K562 (cell line): ENCODE measurements at regions of chr10 and their contacts with region 1.

Region 1: GRCh38 chr10:98748298-98748697 is 301.6 kb upstream of the HPS1 start:
- DNase-seq: peak; percentile 28 to 73 (median 33)
- ATAC-seq: peak; percentile 74
- H3K4me3 ChIP-seq: no peak overlapping the region
- H3K27ac ChIP-seq: no peak overlapping the region
- H3K4me1 ChIP-seq: no peaks in the 10 kb centered on the region
- H3K27me3 ChIP-seq: no peaks in the 10 kb centered on the region
- CTCF ChIP-seq: peak; percentile 38 to 50 (median 41); a peak in 5 of 6 replicates
- EP300 ChIP-seq: no peak
- POLR2A ChIP-seq: no peak
- RAD21 ChIP-seq: peak; percentile 56 to 79

Region 2: GRCh38 chr10:98815039-98815885 is 67.0 kb after region 1 on chr10:
- CTCF ChIA-PET with region 1: no interaction called
- POLR2A ChIA-PET with region 1: no interaction called
- in situ Hi-C with region 1: no loop called
- intact Hi-C with region 1: no loop called
- DNase-seq: no peak
- ATAC-seq: no peak
- H3K4me3 ChIP-seq: no peak overlapping the region
- H3K27ac ChIP-seq: no peak overlapping the region
- H3K4me1 ChIP-seq: no peaks in the 10 kb centered on the region; a peak in 1 of 5 replicates
- H3K27me3 ChIP-seq: no peaks in the 10 kb centered on the region
- CTCF ChIP-seq: no peak
- EP300 ChIP-seq: no peak
- POLR2A ChIP-seq: no peak
- RAD21 ChIP-seq: no peak

Region 3: DNA sequence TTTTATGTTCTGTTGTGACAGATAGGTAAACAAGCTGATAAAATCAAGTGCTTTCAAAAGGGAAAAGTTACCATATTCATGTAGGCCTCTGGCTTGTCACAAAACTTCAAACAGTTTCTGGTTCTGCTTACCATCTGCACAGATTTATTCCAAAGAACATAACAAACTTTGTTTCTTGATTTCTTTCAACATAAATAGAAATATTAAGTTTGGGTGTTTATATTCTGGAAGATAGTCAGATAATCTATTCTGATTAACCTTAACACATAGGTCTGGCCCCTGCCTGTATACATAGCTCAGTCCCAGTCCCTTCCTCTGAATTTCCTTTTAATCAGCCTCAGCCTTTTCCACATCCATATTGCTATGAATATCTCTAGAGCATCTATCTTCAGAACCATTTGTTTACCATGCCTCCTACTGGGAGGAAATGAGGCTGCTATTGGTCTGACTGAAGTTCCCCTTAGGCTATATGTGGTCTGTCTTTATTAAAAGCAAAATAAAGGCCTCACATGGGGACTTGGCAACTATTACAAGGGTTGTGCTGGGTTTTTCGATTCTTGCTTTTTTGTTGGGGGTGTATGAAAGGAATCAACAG is 168.3 kb after region 1 on chr10:
- CTCF ChIA-PET with region 1: no interaction called
- POLR2A ChIA-PET with region 1: no interaction called
- in situ Hi-C with region 1: no loop called
- intact Hi-C with region 1: loop called (anchors 2 kb)
- DNase-seq: peak in 2 of 4 experiments; percentile 25 to 44
- ATAC-seq: peak; percentile 69
- H3K4me3 ChIP-seq: no peak overlapping the region
- H3K27ac ChIP-seq: no peak overlapping the region
- H3K4me1 ChIP-seq: peaks cover 7 to 39% of the 10 kb centered on the region in 2 experiments; a peak in 4 of 5 replicates
- H3K27me3 ChIP-seq: no peaks in the 10 kb centered on the region
- CTCF ChIP-seq: peak; percentile 18 to 46 (median 27); a peak in 3 of 6 replicates
- EP300 ChIP-seq: no peak
- POLR2A ChIP-seq: no peak
- RAD21 ChIP-seq: peak; percentile 25 to 59; a peak in 2 of 4 replicates

Region 4: DNA sequence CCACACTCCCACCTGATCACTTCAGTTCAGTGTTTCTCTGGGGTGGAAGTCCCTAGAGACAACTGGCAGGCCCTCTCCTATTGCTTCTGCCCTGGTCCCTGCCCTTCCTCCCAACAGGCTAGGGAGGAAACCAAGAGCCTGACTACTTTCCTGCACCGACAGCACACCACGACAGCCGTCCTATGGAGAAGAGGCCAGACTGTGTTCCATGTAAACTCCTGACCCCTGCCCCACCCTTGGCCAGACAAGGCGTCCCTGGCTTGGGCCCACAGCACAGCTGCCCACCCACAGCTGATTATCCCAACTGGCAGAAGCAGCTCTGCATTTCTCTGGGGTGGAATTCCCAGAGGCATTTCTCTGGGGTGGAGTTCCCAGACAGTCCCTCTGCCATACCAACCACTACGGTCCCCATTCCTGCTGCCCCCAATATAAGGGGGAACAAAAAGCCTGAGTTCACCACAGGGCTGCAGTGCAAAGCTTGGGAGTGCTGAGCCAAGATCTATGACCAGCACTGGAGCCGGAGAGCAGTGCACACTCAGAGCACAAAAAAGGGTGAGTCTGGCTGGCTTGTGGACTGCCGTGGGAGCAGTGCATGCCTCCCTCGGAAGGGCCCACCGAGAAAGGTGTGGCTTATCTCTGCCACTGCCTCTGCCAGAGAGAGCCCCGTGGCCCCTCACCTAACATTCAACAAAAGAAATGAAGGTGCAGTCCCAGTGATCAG is 293.9 kb after region 1 on chr10:
- CTCF ChIA-PET with region 1: interaction called, 7 read pairs
- POLR2A ChIA-PET with region 1: no interaction called
- in situ Hi-C with region 1: loop called (anchors 10 kb)
- intact Hi-C with region 1: loop called (anchors 1 kb)
- DNase-seq: no peak
- ATAC-seq: peak; percentile 32; the same call in 2 of the 3 replicates
- H3K4me3 ChIP-seq: no peak overlapping the region
- H3K27ac ChIP-seq: no peak overlapping the region; the same call in 2 of the 3 replicates
- H3K4me1 ChIP-seq: peaks cover 0 to 5% of the 10 kb centered on the region in 2 experiments; a peak in 1 of 5 replicates
- H3K27me3 ChIP-seq: no peaks in the 10 kb centered on the region
- CTCF ChIP-seq: no peak
- EP300 ChIP-seq: no peak
- POLR2A ChIP-seq: no peak
- RAD21 ChIP-seq: no peak

Region 5: GRCh38 chr10:99172130-99172738 is 423.9 kb after region 1 on chr10:
- CTCF ChIA-PET with region 1: no interaction called
- POLR2A ChIA-PET with region 1: no interaction called
- in situ Hi-C with region 1: no loop called
- intact Hi-C with region 1: loop called (anchors 5 kb)
- DNase-seq: peak; percentile 14 to 46 (median 24)
- ATAC-seq: peak; percentile 67; the same call in 2 of the 3 replicates
- H3K4me3 ChIP-seq: no peak overlapping the region
- H3K27ac ChIP-seq: no peak overlapping the region
- H3K4me1 ChIP-seq: no peaks in the 10 kb centered on the region
- H3K27me3 ChIP-seq: no peaks in the 10 kb centered on the region
- CTCF ChIP-seq: peak; percentile 51 to 63 (median 55); a peak in 5 of 6 replicates
- EP300 ChIP-seq: no peak
- POLR2A ChIP-seq: no peak
- RAD21 ChIP-seq: peak; percentile 62 to 63

Region 6: DNA sequence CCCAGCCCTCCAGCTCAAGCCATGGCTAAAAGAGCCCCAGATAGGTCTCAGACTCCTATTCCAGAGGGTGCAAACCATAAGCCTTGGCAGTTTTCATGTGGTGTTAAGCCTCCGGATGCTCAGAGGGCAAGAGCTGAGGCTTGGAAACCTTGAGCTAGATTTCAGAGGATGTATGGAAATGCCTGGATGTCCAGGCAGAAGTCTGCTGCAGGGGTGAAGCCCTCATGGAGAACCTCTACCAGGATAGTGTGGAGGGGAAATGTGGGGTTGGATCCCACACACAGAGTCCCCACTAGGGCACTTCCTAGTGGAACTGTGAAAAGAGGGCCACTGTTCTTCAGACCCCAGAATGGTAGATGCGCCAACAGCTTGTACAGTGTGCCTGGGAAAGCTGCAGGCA is 500.5 kb after region 1 on chr10:
- CTCF ChIA-PET with region 1: no interaction called
- POLR2A ChIA-PET with region 1: no interaction called
- in situ Hi-C with region 1: no loop called
- intact Hi-C with region 1: loop called (anchors 5 kb)
- DNase-seq: no peak
- ATAC-seq: no peak
- H3K4me3 ChIP-seq: no peak overlapping the region
- H3K27ac ChIP-seq: no peak overlapping the region
- H3K4me1 ChIP-seq: no peaks in the 10 kb centered on the region
- H3K27me3 ChIP-seq: no peaks in the 10 kb centered on the region
- CTCF ChIP-seq: no peak
- EP300 ChIP-seq: no peak
- POLR2A ChIP-seq: no peak
- RAD21 ChIP-seq: no peak